ENCODE measurements at regions of chr9 and their contacts with region 1.

Region 1: DNA sequence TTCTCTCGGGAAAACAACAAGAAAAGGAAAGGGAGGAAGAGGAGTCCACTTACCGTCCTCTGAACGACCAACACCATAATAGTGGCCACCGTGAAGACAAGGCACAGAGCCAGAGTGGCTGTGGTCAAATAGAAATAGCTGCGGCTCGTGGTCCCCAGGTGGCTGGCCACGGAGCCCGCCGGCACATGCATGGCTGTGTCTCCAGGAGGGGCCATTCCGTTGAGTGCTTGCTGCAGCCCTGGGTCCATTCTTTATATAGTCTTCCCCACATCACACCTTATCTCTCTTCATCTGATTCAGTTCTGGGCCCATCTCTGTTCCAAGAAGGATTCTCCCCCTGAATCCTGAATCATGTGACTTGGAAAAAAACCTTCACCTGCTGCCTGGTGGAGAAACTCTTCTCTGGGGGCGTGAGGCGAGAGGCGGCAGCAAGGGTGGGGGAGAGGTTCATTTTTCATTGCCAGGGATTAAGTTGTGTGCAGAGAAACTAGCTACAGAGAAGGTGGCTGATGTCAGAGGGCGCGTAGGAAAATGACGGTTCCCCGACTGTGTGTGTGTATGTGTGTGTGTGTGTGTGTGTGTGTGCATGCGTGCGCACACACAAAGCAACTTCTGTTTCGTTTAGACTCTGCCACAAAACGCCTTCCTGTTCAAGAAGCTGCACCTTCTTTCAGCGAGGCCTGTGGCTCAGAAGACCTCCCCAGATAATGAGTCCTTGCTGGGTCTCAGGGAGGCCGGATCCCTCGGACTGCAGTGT is at the start of gene TNFSF8:
- DNase-seq: peak; percentile 22 to 89 (median 82)
- ATAC-seq: peak; percentile 93
- H3K4me3 ChIP-seq: peak within 1 kb of the TSS; percentile 87
- H3K4me3 Mint-ChIP-seq: peak within 1 kb of the TSS; percentile 78 to 100 (median 99)
- H3K27ac ChIP-seq: peak within 1 kb of the TSS; percentile 79
- H3K27ac Mint-ChIP-seq: peak within 1 kb of the TSS; percentile 93 to 100 (median 99)
- H3K4me1 ChIP-seq: peaks cover 21 to 27% of the 10 kb centered on the region in 2 donors
- H3K4me1 Mint-ChIP-seq: peaks cover 34 to 62% (median 51%) of the 10 kb centered on the region in 7 donors
- H3K27me3 ChIP-seq: no peaks in the 10 kb centered on the region
- H3K27me3 Mint-ChIP-seq: peaks cover 0 to 4% (median 0%) of the 10 kb centered on the region in 5 donors
- total RNA-seq, gene TNFSF8: 19.3 to 129 (median 31.5) TPM

Region 2: GRCh38 chr9:114397848-114398605 is 532.2 kb before region 1 on chr9:
- CTCF ChIA-PET with region 1: no interaction called
- POLR2A ChIA-PET with region 1: interaction called, 3 read pairs
- intact Hi-C with region 1: loop called in 1 of 2 experiments (anchors 1 kb)
- DNase-seq: peak; percentile 91 to 96 (median 94)
- ATAC-seq: peak; percentile 94
- H3K4me3 ChIP-seq: peak overlapping the region; percentile 98
- H3K4me3 Mint-ChIP-seq: peak overlapping the region; percentile 86 to 99 (median 96)
- H3K27ac ChIP-seq: peak overlapping the region; percentile 97
- H3K27ac Mint-ChIP-seq: peak overlapping the region; percentile 88 to 99 (median 97)
- H3K4me1 ChIP-seq: peaks cover 26 to 44% of the 10 kb centered on the region in 2 donors
- H3K4me1 Mint-ChIP-seq: peaks cover 40 to 48% (median 46%) of the 10 kb centered on the region in 7 donors
- H3K27me3 ChIP-seq: no peaks in the 10 kb centered on the region
- H3K27me3 Mint-ChIP-seq: no peaks in the 10 kb centered on the region

Region 3: DNA sequence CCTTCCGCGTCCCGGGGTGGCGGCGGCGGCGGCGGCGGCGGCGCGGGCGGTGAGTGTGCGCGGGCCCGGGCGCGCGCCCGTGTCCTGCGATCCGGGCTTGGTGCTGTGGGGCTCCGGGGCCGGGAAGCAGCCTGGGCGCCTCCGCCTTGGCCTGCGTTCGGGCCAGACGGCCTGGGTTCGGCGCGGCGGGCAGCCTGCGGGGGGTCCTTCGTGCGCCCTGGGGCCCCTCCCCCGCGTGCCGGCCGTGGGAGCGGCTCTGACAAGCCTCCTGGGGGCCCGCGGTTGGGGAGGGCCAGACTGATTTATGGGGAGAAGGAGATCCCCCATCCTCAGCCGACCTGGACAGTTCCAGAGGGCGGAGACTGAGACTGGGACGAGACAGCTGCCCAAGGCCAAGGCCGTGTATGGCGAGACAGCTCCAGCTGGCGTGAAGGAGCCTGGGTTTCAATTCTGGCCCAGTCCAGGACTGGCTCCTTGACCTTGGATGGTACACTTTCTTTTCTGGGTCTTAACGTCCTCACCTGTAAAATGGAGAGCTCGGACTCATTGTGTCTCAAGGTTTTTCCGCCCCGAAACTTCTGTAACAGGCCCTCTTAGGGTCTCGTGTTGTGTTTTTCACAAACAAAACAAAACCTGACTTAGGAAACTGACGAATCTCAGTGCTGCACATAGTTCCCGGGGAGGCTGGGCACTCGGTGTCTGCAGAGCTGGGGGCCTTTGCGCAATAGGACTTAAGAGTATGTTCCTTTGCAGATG is 318.5 kb before region 1 on chr9:
- CTCF ChIA-PET with region 1: no interaction called
- POLR2A ChIA-PET with region 1: interaction called, 3 read pairs
- intact Hi-C with region 1: loop called in 1 of 2 experiments (anchors 5 kb)
- DNase-seq: peak in 5 of 9 donors; percentile 24 to 44 (median 31)
- ATAC-seq: peak; percentile 82
- H3K4me3 ChIP-seq: peak overlapping the region; percentile 85
- H3K4me3 Mint-ChIP-seq: peak overlapping the region; percentile 90 to 99 (median 92)
- H3K27ac ChIP-seq: peak overlapping the region; percentile 92
- H3K27ac Mint-ChIP-seq: peak overlapping the region; percentile 77 to 98 (median 95)
- H3K4me1 ChIP-seq: peaks cover 14 to 31% of the 10 kb centered on the region in 2 donors
- H3K4me1 Mint-ChIP-seq: peaks cover 34 to 63% (median 55%) of the 10 kb centered on the region in 7 donors
- H3K27me3 ChIP-seq: no peaks in the 10 kb centered on the region
- H3K27me3 Mint-ChIP-seq: no peaks in the 10 kb centered on the region

Region 4: GRCh38 chr9:114718801-114719221 is 211.4 kb before region 1 on chr9:
- CTCF ChIA-PET with region 1: no interaction called
- POLR2A ChIA-PET with region 1: interaction called, 5 read pairs
- intact Hi-C with region 1: loop called in 1 of 2 experiments (anchors 1 kb)
- DNase-seq: peak in 5 of 9 donors; percentile 8 to 91 (median 18)
- ATAC-seq: peak; percentile 76
- H3K4me3 ChIP-seq: no peak overlapping the region
- H3K4me3 Mint-ChIP-seq: peak overlapping the region in 9 of 10 donors; percentile 0 to 75 (median 19)
- H3K27ac ChIP-seq: no peak overlapping the region
- H3K27ac Mint-ChIP-seq: peak overlapping the region in 6 of 9 donors; percentile 12 to 97 (median 64)
- H3K4me1 ChIP-seq: peaks cover 14 to 34% of the 10 kb centered on the region in 2 donors
- H3K4me1 Mint-ChIP-seq: peaks cover 10 to 88% (median 20%) of the 10 kb centered on the region in 7 donors
- H3K27me3 ChIP-seq: no peaks in the 10 kb centered on the region
- H3K27me3 Mint-ChIP-seq: no peaks in the 10 kb centered on the region

Region 5: DNA sequence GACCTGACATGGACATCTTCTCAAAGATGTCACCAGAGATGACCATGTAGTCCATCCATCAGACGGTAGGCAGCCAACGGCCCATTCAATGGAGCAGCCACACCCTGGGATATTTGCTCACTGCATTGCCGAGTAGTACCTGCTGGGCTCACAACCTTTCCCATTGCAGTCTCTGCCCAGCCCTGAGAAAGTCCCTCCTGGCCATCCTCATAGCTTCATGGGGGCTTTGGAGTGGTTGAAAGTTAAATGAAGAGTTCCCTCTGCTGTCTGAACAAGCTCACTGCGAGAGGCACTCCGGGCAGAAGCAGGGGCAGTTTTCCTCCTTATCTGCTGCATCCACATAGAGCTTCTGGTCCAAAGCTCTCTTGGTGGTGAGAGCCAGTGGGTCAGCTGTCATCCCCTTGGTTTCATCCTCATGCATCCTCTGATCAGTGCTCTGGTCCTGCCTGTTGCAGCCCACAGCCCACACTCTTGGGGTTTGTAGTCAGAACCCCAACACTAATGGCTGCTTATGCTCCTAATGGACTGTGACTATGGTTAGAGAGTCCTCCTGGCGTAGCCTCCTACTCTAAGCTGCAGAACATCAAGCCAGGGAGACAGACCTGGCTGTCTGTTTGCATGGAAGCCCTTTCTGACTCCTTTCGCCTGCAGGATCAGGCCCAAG is 23.2 kb before region 1 on chr9:
- CTCF ChIA-PET with region 1: interaction called, 18 read pairs
- POLR2A ChIA-PET with region 1: interaction called, 7 read pairs
- intact Hi-C with region 1: loop called (anchors 1 to 2 kb)
- DNase-seq: peak in 2 of 9 donors; percentile 31 to 41
- ATAC-seq: peak; percentile 39
- H3K4me3 ChIP-seq: no peak overlapping the region
- H3K4me3 Mint-ChIP-seq: peak overlapping the region in 5 of 10 donors; percentile 6 to 79 (median 74)
- H3K27ac ChIP-seq: no peak overlapping the region
- H3K27ac Mint-ChIP-seq: peak overlapping the region in 8 of 9 donors; percentile 20 to 96 (median 53)
- H3K4me1 ChIP-seq: peaks cover 60 to 78% of the 10 kb centered on the region in 2 donors
- H3K4me1 Mint-ChIP-seq: peaks cover 50 to 79% (median 58%) of the 10 kb centered on the region in 7 donors
- H3K27me3 ChIP-seq: no peaks in the 10 kb centered on the region
- H3K27me3 Mint-ChIP-seq: no peaks in the 10 kb centered on the region

Region 6: GRCh38 chr9:114953917-114954316 is 23.7 kb after region 1 on chr9:
- CTCF ChIA-PET with region 1: no interaction called
- POLR2A ChIA-PET with region 1: no interaction called
- intact Hi-C with region 1: loop called (anchors 1 to 2 kb)
- DNase-seq: no peak
- ATAC-seq: peak; percentile 42
- H3K4me3 ChIP-seq: no peak overlapping the region
- H3K4me3 Mint-ChIP-seq: no peak overlapping the region
- H3K27ac ChIP-seq: no peak overlapping the region
- H3K27ac Mint-ChIP-seq: no peak overlapping the region
- H3K4me1 ChIP-seq: peaks cover 5 to 6% of the 10 kb centered on the region in 2 donors
- H3K4me1 Mint-ChIP-seq: peaks cover 14 to 39% (median 21%) of the 10 kb centered on the region in 7 donors
- H3K27me3 ChIP-seq: no peaks in the 10 kb centered on the region
- H3K27me3 Mint-ChIP-seq: peaks cover 0 to 2% (median 0%) of the 10 kb centered on the region in 5 donors